IMR-90 (cell line): ENCODE measurements at regions of chr5 and their contacts with region 1.

Region 1: DNA sequence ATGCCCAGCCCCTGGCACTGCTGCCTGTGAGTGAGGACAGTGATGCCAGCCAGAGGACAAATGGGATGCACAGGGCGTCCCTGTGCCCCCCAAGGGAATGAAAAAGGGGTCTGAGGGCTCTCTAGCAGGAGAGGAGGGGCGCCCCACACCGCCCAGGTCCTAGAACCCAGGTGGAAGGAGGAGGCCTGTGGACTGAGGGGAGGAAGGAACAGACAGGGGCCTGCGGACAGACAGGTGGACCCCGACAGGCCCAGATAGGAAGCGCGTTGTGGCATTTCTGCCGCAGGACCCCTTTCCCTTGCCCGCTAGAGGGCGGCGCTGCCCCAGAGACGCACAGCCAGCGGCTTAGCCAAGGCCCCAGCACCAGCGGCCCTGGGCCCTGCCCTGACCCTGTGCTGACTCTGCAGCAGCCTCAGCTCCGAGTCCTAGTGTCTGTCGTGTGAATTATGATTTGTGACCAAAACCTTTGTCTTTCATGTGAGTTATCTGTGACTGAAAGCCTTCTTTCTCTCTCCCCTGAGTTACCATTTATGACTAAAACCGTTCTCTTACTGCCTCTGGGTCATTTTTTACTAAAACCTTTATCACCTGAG is 30.7 kb downstream of the TRIP13 start:
- DNase-seq: peak; percentile 55
- ATAC-seq: peak; percentile 97
- H3K4me3 ChIP-seq: no peak overlapping the region
- H3K27ac ChIP-seq: no peak overlapping the region
- H3K4me1 ChIP-seq: no peaks in the 10 kb centered on the region; the same call in 1 of the 2 replicates
- H3K27me3 ChIP-seq: peaks cover 7% of the 10 kb centered on the region
- CTCF ChIP-seq: peak; percentile 93
- POLR2A ChIP-seq: 0 out of 2 replicates have a peak, but pooled peaks have one; percentile 26
- RAD21 ChIP-seq: peak; percentile 95

Region 2: DNA sequence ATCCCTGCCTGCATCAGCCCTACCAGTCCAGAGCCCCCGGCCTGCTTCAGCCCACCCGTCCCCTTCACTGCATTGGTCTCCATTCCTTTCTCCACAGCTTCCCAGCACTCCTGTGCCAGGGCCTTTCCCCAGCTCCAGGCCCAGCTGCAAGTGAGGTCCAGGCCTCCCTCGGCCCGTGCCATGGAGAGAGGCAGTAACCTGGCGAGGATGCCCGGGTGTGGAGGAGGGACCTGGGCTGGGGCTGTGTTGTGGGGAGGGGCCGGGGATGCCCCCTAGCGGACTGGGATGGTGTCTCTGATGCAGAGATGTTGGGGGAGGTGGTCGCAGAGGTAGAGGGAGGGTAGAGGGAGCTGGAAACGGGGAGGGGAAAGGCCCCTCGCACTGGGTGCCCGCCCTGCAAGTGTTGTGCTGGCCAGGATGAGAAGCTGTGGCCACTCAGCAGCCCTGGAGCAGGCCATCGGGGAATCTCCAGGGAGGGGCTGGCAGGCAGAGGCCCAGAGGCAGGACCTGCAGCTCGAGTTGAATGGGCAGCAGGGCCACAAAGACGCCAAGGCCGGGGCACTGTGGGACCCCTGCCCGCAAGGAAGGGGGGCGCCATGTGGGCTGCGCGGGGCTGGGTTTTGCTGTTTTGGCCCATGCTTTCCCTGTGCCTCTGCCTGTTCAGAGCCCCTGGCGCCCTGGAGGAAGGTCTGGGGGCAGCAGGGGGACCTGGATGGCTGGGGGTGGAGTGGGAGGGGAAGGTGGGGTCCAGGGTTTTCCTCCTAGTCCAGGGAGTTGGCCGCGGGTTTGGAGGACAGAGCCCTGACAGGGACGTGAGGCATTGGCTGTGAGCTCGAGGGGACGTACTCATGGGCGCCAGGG is 59.2 kb after region 1 on chr5:
- CTCF ChIA-PET with region 1: no interaction called
- POLR2A ChIA-PET with region 1: no interaction called
- dilution Hi-C with region 1: no loop called
- in situ Hi-C with region 1: no loop called
- intact Hi-C with region 1: loop called (anchors 1 kb)
- DNase-seq: no peak
- ATAC-seq: no peak
- H3K4me3 ChIP-seq: no peak overlapping the region
- H3K27ac ChIP-seq: no peak overlapping the region
- H3K4me1 ChIP-seq: no peaks in the 10 kb centered on the region
- H3K27me3 ChIP-seq: peaks cover 30% of the 10 kb centered on the region
- CTCF ChIP-seq: 0 out of 2 replicates have a peak, but pooled peaks have one; percentile 24
- POLR2A ChIP-seq: no peak
- RAD21 ChIP-seq: no peak

Region 3: DNA sequence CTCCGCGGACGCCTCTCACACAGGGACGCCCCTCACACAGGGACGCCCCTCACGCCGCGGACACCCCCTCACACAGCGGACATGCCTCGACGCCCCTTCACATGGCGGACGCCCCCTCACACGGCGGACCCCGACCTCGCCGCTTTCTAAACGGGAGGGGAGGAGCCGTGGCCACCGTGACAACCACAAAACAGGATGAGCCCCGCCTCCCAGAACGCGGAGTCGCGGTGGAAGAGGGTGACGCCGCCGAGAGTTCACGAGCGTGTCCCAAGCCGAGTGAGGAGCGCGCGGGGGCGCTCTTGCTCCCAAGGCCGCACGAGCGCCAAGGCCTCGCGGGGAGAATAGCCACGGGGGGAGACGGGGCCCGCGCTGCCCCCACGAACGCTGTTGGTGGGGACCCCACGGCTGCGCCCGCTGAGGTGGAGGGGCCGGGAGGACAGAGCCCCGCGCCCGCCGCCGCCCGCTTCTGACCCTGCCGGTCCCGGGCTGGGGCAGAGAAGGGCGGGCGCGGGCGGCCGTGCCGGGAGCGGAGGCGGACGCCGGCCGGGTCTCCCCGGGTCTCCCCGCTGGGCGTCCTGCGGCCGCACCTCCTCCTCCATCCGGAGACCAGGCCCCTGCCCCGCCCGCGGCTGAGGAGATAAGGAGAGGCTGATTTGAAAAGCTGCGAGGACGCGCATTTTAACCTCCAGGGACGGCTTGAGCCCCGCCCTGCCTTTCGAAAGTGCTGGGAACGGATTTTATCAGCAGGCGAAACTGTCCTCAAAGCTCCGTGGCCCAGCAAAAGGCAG is 81.3 kb after region 1 on chr5:
- CTCF ChIA-PET with region 1: interaction called, 3 read pairs
- POLR2A ChIA-PET with region 1: no interaction called
- dilution Hi-C with region 1: no loop called
- in situ Hi-C with region 1: no loop called
- intact Hi-C with region 1: loop called (anchors 5 kb)
- DNase-seq: peak; percentile 16
- ATAC-seq: peak; percentile 85
- H3K4me3 ChIP-seq: peak overlapping the region; percentile 29
- H3K27ac ChIP-seq: no peak overlapping the region
- H3K4me1 ChIP-seq: no peaks in the 10 kb centered on the region; the same call in 1 of the 2 replicates
- H3K27me3 ChIP-seq: peaks cover 69% of the 10 kb centered on the region
- CTCF ChIP-seq: peak; percentile 36
- POLR2A ChIP-seq: no peak
- RAD21 ChIP-seq: peak; percentile 11; the same call in 1 of the 2 replicates

Region 4: DNA sequence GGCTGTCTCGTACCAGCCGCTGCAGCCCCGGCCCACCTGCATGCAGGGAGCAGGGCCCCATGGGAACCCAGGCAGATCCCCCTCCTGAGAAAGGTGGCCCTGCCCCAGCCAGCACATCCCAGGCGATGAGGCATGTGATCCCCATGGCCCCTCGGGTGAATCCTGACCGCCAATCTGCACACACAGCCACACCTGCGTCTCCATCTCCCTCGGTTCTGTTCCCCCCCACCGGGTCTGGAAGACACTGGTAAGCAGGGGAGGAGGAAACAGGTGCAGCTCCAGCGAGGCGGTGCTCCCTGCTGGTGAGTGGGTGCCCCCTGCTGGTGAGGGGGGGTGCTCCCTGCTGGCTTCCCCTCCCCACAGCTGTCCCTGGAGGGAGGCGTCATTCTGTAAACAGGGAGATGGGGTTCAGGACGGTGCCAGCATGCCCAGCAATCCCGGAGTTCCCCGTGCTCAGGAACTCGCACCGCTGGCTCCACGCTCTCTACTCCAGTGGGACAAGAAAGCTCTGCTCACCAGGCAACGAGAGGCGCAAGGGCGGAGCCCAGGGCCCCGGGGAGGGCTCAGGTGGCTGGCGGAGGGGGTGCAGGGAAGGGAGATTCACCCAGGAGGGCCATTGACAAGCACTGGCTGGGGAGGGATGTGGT is 216.9 kb after region 1 on chr5:
- CTCF ChIA-PET with region 1: interaction called, 4 read pairs
- POLR2A ChIA-PET with region 1: no interaction called
- dilution Hi-C with region 1: no loop called
- in situ Hi-C with region 1: no loop called
- intact Hi-C with region 1: loop called (anchors 1 kb)
- DNase-seq: peak; percentile 31
- ATAC-seq: peak; percentile 85
- H3K4me3 ChIP-seq: no peak overlapping the region
- H3K27ac ChIP-seq: no peak overlapping the region
- H3K4me1 ChIP-seq: no peaks in the 10 kb centered on the region
- H3K27me3 ChIP-seq: peaks cover 32% of the 10 kb centered on the region; the same call in 1 of the 2 replicates
- CTCF ChIP-seq: peak; percentile 60
- POLR2A ChIP-seq: no peak
- RAD21 ChIP-seq: peak; percentile 65

Region 5: DNA sequence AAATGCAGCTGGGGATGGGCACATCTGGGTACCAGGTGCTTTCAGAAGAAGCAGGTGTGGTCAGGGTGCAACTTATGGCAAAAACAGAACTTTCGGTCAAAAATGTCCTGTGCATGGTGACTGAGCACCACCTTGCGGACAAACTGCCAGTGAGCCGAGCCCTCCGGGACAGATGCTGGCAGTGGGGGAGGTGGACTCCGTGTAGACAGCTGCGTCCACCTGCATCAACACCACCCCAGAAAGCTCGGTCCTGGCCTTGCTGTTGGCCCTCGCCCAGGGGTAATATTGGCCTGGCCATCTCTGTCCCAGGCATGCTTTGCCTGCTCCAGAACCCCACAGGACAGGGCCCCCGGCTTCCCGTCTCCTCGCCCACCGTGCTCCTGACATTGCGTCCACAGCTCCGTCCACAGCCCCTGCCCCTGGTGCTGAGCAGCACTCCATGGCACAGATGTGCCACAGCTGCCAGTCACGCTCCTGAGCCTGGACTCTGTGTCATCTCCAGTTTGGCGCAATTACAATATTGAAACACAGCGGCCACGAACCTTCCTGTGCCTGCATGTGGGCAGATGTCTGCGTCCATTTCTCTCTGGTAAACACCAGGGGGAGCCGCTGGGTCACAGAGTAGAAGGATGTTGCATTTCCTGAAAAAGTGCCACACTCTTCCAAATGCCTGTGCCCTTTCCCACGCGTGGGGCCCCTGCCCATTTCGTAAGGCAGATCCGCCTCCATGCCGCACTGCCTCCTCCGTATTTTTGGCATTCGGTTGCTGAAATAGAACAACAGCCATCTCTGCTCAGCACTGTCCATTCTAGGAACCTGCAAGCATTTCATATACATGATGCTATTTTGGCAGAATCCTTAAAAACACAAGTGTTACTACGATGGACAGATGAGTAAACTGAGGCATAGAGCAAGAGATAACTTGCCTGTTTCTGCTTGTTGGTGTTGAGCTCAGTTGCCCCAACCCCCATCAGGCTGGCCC is 244.6 kb after region 1 on chr5:
- CTCF ChIA-PET with region 1: interaction called, 17 read pairs
- POLR2A ChIA-PET with region 1: no interaction called
- dilution Hi-C with region 1: no loop called
- in situ Hi-C with region 1: no loop called
- intact Hi-C with region 1: loop called (anchors 1 kb)
- DNase-seq: peak; percentile 61
- ATAC-seq: peak; percentile 95
- H3K4me3 ChIP-seq: no peak overlapping the region
- H3K27ac ChIP-seq: no peak overlapping the region
- H3K4me1 ChIP-seq: peaks cover 2% of the 10 kb centered on the region; the same call in 1 of the 2 replicates
- H3K27me3 ChIP-seq: peaks cover 14% of the 10 kb centered on the region; the same call in 1 of the 2 replicates
- CTCF ChIP-seq: peak; percentile 79
- POLR2A ChIP-seq: no peak
- RAD21 ChIP-seq: peak; percentile 65